ENCODE measurements at regions of chr11 and their contacts with region 1.

Region 1: DNA sequence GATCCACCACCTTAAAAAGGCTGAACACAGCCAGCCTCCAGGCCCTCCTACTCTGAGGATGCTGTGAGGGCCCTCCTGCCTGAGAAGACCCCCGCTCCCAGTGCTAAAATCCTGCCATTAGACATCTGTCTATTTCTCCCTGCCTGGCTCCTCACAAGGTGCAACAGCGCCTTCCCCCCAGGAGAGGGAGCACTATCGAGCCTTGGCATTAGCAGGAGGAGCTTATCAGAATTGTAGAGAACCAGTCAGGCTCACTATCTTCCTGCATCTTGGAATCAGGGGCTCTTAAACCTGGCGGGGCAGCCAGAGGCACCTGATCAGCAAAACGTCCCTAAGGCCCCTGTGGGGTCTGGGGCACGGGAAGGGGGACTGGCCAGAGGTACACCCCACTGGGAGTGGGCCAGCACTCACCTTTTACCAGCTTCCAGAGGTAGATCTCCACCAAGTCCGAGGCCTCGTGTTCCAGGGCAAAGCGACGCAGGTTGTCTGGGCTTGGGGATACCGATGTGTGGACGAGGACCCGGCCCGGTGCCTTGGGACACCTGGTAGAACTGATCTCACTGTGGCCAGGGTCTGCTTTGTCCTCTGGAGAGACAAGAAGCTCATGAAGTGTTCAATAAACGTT is 28.7 kb downstream of the CHRDL2 start:
- DNase-seq: peak; percentile 85 to 89
- H3K4me3 ChIP-seq: no peak overlapping the region
- H3K4me3 Mint-ChIP-seq: no peak overlapping the region
- H3K27ac Mint-ChIP-seq: no peak overlapping the region
- H3K4me1 ChIP-seq: no peaks in the 10 kb centered on the region
- H3K4me1 Mint-ChIP-seq: no peaks in the 10 kb centered on the region
- H3K27me3 ChIP-seq: no peaks in the 10 kb centered on the region
- H3K27me3 Mint-ChIP-seq: no peaks in the 10 kb centered on the region
- CTCF ChIP-seq: peak; percentile 99 to 100

Region 2: GRCh38 chr11:74662487-74663103 is 39.9 kb before region 1 on chr11:
- CTCF ChIA-PET with region 1: no interaction called
- POLR2A ChIA-PET with region 1: no interaction called
- intact Hi-C with region 1: no loop called
- DNase-seq: no peak
- H3K4me3 ChIP-seq: no peak overlapping the region
- H3K4me3 Mint-ChIP-seq: no peak overlapping the region
- H3K27ac Mint-ChIP-seq: no peak overlapping the region
- H3K4me1 ChIP-seq: no peaks in the 10 kb centered on the region
- H3K4me1 Mint-ChIP-seq: no peaks in the 10 kb centered on the region
- H3K27me3 ChIP-seq: no peaks in the 10 kb centered on the region
- H3K27me3 Mint-ChIP-seq: no peaks in the 10 kb centered on the region
- CTCF ChIP-seq: no peak

Region 3: DNA sequence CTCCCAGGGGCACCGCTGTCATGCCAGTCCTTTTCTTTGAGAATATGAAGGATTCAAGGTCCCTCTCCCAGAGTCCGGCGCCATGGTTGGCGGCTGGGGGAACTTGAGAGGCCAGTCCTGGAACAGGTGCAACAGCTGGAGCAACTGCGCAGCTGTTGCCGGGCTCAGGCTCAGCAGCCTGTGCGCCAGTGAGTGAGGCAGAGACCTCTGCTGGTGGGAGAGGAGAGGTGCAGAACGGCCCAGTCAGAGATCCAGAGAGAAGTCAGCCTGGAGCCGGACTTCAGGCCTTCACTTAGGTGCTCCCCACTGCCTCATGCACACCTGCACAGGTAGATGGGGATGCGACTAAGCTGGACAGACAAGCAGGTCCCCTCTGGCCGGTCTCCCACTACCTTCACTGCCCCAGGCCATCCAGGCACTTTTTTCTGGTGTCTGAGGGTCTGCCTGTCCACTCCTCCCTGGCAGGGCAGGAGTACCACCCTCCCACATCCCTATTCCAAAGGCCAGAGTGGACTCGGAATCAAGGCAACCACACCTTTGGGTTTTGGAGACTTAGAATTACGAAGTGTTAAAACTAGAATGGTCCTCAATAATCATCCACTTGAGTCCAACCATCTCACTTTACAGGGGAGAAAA is 24.2 kb after region 1 on chr11:
- CTCF ChIA-PET with region 1: interaction called, 158 read pairs
- POLR2A ChIA-PET with region 1: interaction called, 3 read pairs
- intact Hi-C with region 1: loop called (anchors 1 kb)
- DNase-seq: peak; percentile 84 to 89
- H3K4me3 ChIP-seq: no peak overlapping the region
- H3K4me3 Mint-ChIP-seq: no peak overlapping the region
- H3K27ac Mint-ChIP-seq: no peak overlapping the region
- H3K4me1 ChIP-seq: 0 out of 2 replicates have a peak, but pooled peaks cover 7% of the 10 kb centered on the region
- H3K4me1 Mint-ChIP-seq: peaks cover 13% of the 10 kb centered on the region
- H3K27me3 ChIP-seq: no peaks in the 10 kb centered on the region
- H3K27me3 Mint-ChIP-seq: peaks cover 15% of the 10 kb centered on the region
- CTCF ChIP-seq: peak; percentile 98 to 100

Region 4: DNA sequence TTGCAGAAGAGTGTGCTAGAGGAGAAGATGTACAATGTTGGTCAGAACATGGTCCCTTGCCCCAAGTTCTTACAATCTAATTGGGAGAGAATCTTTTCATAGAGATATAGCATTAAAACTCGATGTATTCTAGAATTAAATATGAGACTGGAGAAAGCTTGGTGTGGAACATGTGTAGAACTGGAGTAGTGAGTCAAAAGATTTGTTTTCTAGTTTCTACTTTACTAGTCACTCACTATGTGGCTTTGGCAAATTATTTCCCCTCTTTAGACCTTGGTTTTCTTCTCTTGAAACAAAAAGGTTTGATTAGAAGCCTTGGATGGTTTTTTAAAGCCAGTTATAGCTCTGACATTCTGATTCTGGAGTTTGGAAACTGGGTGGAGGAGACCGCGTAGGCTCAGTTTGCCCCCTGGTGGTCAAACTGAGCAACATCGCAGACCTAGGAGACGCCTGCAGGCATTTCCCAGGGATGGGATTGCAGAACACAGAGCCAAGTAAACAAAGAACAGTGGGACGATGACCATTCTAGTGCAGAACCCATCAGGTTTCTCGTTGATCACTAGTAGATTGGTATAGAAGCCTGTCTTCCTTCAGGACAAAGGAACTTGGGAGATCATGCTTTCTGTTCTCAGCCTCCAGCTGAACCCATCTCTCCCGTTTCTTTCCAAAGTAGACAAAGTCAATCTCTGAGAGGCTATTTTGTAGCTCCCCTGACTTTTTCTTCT is 37.2 kb after region 1 on chr11:
- CTCF ChIA-PET with region 1: interaction called, 48 read pairs
- POLR2A ChIA-PET with region 1: no interaction called
- intact Hi-C with region 1: loop called (anchors 1 kb)
- DNase-seq: peak; percentile 75 to 82
- H3K4me3 ChIP-seq: no peak overlapping the region
- H3K4me3 Mint-ChIP-seq: no peak overlapping the region
- H3K27ac Mint-ChIP-seq: no peak overlapping the region
- H3K4me1 ChIP-seq: no peaks in the 10 kb centered on the region; the same call in 1 of the 2 replicates
- H3K4me1 Mint-ChIP-seq: peaks cover 5% of the 10 kb centered on the region
- H3K27me3 ChIP-seq: no peaks in the 10 kb centered on the region
- H3K27me3 Mint-ChIP-seq: no peaks in the 10 kb centered on the region
- CTCF ChIP-seq: peak; percentile 93 to 95

Region 5: GRCh38 chr11:74849525-74850391 is 147.3 kb after region 1 on chr11:
- CTCF ChIA-PET with region 1: interaction called, 12 read pairs
- POLR2A ChIA-PET with region 1: no interaction called
- intact Hi-C with region 1: no loop called
- DNase-seq: peak; percentile 81
- H3K4me3 ChIP-seq: no peak overlapping the region
- H3K4me3 Mint-ChIP-seq: peak overlapping the region; percentile 61
- H3K27ac Mint-ChIP-seq: peak overlapping the region; percentile 93
- H3K4me1 ChIP-seq: peaks cover 35% of the 10 kb centered on the region
- H3K4me1 Mint-ChIP-seq: peaks cover 12% of the 10 kb centered on the region
- H3K27me3 ChIP-seq: no peaks in the 10 kb centered on the region
- H3K27me3 Mint-ChIP-seq: no peaks in the 10 kb centered on the region
- CTCF ChIP-seq: no peak